ENCODE measurements at regions of chr20 and their contacts with region 1.

Region 1: GRCh38 chr20:36460648-36461599 is 80.4 kb upstream of the MYL9 start:
- DNase-seq: peak; percentile 81
- H3K4me3 Mint-ChIP-seq: peak overlapping the region; percentile 70
- H3K27ac Mint-ChIP-seq: peak overlapping the region; percentile 87
- H3K4me1 Mint-ChIP-seq: peaks cover 48% of the 10 kb centered on the region
- H3K27me3 Mint-ChIP-seq: peaks cover 5% of the 10 kb centered on the region

Region 2: GRCh38 chr20:35619196-35620095 is 841.5 kb before region 1 on chr20:
- intact Hi-C with region 1: loop called (anchors 5 kb)
- DNase-seq: peak; percentile 75
- H3K4me3 Mint-ChIP-seq: peak overlapping the region; percentile 88
- H3K27ac Mint-ChIP-seq: peak overlapping the region; percentile 89
- H3K4me1 Mint-ChIP-seq: peaks cover 27% of the 10 kb centered on the region
- H3K27me3 Mint-ChIP-seq: no peaks in the 10 kb centered on the region

Region 3: GRCh38 chr20:36064658-36065426 is 396.1 kb before region 1 on chr20:
- intact Hi-C with region 1: loop called (anchors 10 kb)
- DNase-seq: peak; percentile 85
- H3K4me3 Mint-ChIP-seq: peak overlapping the region; percentile 83
- H3K27ac Mint-ChIP-seq: no peak overlapping the region
- H3K4me1 Mint-ChIP-seq: no peaks in the 10 kb centered on the region
- H3K27me3 Mint-ChIP-seq: peaks cover 37% of the 10 kb centered on the region

Region 4: GRCh38 chr20:36411861-36412454 is 49.0 kb before region 1 on chr20:
- intact Hi-C with region 1: no loop called
- DNase-seq: no peak
- H3K4me3 Mint-ChIP-seq: no peak overlapping the region
- H3K27ac Mint-ChIP-seq: no peak overlapping the region
- H3K4me1 Mint-ChIP-seq: no peaks in the 10 kb centered on the region
- H3K27me3 Mint-ChIP-seq: peaks cover 2% of the 10 kb centered on the region

Region 5: GRCh38 chr20:36527331-36528125 is 66.6 kb after region 1 on chr20:
- intact Hi-C with region 1: no loop called
- DNase-seq: no peak
- H3K4me3 Mint-ChIP-seq: no peak overlapping the region
- H3K27ac Mint-ChIP-seq: no peak overlapping the region
- H3K4me1 Mint-ChIP-seq: no peaks in the 10 kb centered on the region
- H3K27me3 Mint-ChIP-seq: no peaks in the 10 kb centered on the region

Region 6: GRCh38 chr20:36573103-36573794 is 112.3 kb after region 1 on chr20 and contains the start of gene TGIF2:
- intact Hi-C with region 1: loop called (anchors 1 kb)
- DNase-seq: peak; percentile 79
- H3K4me3 Mint-ChIP-seq: peak within 1 kb of the TSS; percentile 96
- H3K27ac Mint-ChIP-seq: peak within 1 kb of the TSS; percentile 97
- H3K4me1 Mint-ChIP-seq: peaks cover 37% of the 10 kb centered on the region
- H3K27me3 Mint-ChIP-seq: peaks cover 3% of the 10 kb centered on the region
- total RNA-seq, gene TGIF2: 50.9 and 55.4 TPM in 2 replicates

Region 7: DNA sequence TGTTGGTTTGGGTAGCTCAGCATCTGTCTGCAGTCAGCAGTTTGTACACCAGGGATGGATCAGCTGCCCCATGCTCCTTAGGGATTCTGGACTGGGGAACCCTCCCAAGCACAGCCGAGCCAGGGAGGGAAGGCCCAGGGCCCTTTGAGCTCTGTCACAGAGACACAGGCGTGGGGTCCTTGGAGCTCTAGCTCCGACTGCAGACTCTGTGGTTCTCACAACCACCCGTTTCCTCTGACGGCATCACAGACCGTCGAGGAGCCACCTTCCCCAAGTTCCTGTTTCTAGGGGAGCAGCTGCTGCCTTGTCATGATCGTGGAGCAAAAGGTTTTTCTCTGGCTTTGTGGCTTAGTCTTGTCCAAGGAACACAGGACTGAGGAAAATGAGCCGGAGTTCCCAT is 185.1 kb after region 1 on chr20 and contains the start of gene SLA2:
- intact Hi-C with region 1: loop called (anchors 2 kb)
- DNase-seq: peak; percentile 61
- H3K4me3 Mint-ChIP-seq: peak within 1 kb of the TSS; percentile 98
- H3K27ac Mint-ChIP-seq: peak within 1 kb of the TSS; percentile 99
- H3K4me1 Mint-ChIP-seq: peaks cover 48% of the 10 kb centered on the region
- H3K27me3 Mint-ChIP-seq: no peaks in the 10 kb centered on the region
- total RNA-seq, gene SLA2: 62.0 and 64.0 TPM in 2 replicates

Region 8: GRCh38 chr20:36835453-36836198 is 374.7 kb after region 1 on chr20:
- intact Hi-C with region 1: loop called (anchors 10 kb)
- DNase-seq: peak; percentile 84
- H3K4me3 Mint-ChIP-seq: peak overlapping the region; percentile 81
- H3K27ac Mint-ChIP-seq: peak overlapping the region; percentile 89
- H3K4me1 Mint-ChIP-seq: peaks cover 26% of the 10 kb centered on the region
- H3K27me3 Mint-ChIP-seq: peaks cover 2% of the 10 kb centered on the region